Activated T-helper 2 cell treated with anti-CD3 and anti-CD28 coated beads, Interferon-gamma antibody, Interleukin-2, Interleukin-4, amounts not matched to agents 10 μg/mL and 5 μg/mL and 100 μg/mL, durations not matched to agents 14 hours and 24 hours and 36 hours (primary cell): ENCODE measurements at regions of chr2 and their contacts with region 1.

Region 1: DNA sequence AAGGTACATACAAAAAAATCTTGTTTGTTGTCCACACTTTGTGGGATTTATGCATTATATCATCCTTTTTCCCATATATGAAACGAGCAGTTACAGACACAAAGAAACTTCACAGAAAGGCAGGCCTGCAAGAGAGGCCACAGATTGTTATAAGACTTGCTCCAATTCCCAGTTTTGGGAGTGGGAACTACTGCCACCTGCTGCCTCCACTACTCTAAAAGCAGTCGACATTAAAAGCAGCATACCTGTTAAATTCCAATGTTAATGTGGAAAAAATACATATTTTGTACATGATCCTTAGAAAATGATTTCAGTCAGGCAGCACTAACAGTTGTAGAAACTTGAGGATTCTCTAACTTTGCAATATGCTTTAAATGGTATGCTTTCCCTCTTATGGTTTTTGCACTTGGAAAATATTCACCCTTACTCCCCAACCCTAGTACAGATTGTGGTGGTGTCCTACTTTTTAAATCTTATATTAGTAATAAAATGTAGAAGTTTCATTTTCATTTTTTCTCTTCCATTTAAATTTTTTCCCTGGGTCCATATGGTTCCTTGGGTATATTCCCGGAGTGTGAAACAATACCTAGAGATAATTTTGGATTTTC is 37.9 kb downstream of the SLC38A11 start:
- DNase-seq: no peak
- H3K4me3 Mint-ChIP-seq: no peak overlapping the region
- H3K27ac Mint-ChIP-seq: no peak overlapping the region
- H3K4me1 Mint-ChIP-seq: no peaks in the 10 kb centered on the region
- H3K27me3 Mint-ChIP-seq: peaks cover 22% of the 10 kb centered on the region

Region 2: DNA sequence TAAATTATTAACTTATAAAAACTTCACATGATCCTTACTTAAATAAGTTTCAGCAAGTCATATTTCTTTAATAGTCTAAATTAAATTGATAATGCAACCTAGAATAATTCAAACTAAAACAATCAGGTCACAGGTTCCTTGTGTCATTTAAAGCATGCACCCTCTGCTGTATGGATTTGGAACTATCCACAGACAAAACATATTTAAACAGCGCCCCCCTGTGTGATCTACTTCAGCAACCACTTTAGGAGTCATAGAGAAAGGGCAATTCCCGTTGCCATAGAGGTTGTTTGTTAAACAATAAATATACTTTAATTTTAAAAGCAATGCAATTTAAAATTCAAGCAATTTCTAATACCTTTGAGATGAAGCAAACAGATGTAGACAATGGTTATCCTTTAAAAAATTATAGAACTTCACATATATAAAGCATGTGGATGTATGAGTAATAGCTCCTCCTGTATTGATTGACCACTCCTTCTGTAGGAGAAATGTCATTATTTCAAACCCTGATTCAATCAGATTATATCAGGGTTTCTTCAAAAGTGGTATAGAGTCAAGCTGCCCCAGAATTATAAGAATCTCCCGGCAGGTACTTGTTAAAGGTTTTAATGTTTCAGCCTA is 317.3 kb before region 1 on chr2:
- intact Hi-C with region 1: no loop called
- DNase-seq: no peak
- H3K4me3 Mint-ChIP-seq: no peak overlapping the region
- H3K27ac Mint-ChIP-seq: no peak overlapping the region
- H3K4me1 Mint-ChIP-seq: no peaks in the 10 kb centered on the region
- H3K27me3 Mint-ChIP-seq: no peaks in the 10 kb centered on the region

Region 3: GRCh38 chr2:164868563-164869419 is 48.6 kb before region 1 on chr2:
- intact Hi-C with region 1: no loop called
- DNase-seq: no peak
- H3K4me3 Mint-ChIP-seq: no peak overlapping the region
- H3K27ac Mint-ChIP-seq: no peak overlapping the region
- H3K4me1 Mint-ChIP-seq: no peaks in the 10 kb centered on the region
- H3K27me3 Mint-ChIP-seq: peaks cover 2% of the 10 kb centered on the region

Region 4: GRCh38 chr2:165055082-165055851 is 137.9 kb after region 1 on chr2:
- intact Hi-C with region 1: loop called (anchors 10 kb)
- DNase-seq: peak; percentile 14
- H3K4me3 Mint-ChIP-seq: no peak overlapping the region
- H3K27ac Mint-ChIP-seq: no peak overlapping the region
- H3K4me1 Mint-ChIP-seq: peaks cover 18% of the 10 kb centered on the region
- H3K27me3 Mint-ChIP-seq: peaks cover 20% of the 10 kb centered on the region